ENCODE measurements at regions of chr20 and their contacts with region 1.

Region 1: GRCh38 chr20:18287915-18288748 is at the start of gene ZNF133:
- DNase-seq: peak; percentile 97
- ATAC-seq: peak; percentile 98 to 99 (median 98)
- H3K4me3 ChIP-seq: peak within 1 kb of the TSS; percentile 75
- H3K27ac ChIP-seq: peak within 1 kb of the TSS; percentile 95
- H3K4me1 ChIP-seq: no peaks in the 10 kb centered on the region
- H3K27me3 ChIP-seq: peaks cover 0 to 5% (median 1%) of the 10 kb centered on the region in 3 donors
- CTCF ChIP-seq: no peak
- total RNA-seq, gene ZNF133: 5.2 to 9.7 (median 7.3) TPM

Region 2: GRCh38 chr20:17968366-17969279 is 319.5 kb before region 1 on chr20 and contains the starts of genes MGME1 and SNX5:
- intact Hi-C with region 1: loop called in 1 of 2 experiments (anchors 5 kb)
- DNase-seq: peak; percentile 99 to 100
- ATAC-seq: peak; percentile 92 to 96 (median 92)
- H3K4me3 ChIP-seq: peak within 1 kb of the TSS; percentile 97
- H3K27ac ChIP-seq: peak within 1 kb of the TSS; percentile 98
- H3K4me1 ChIP-seq: peaks cover 54% of the 10 kb centered on the region
- H3K27me3 ChIP-seq: no peaks in the 10 kb centered on the region
- CTCF ChIP-seq: no peak
- total RNA-seq, gene MGME1: 8.6 to 21.8 (median 12.2) TPM
- total RNA-seq, gene SNX5: 59.8 to 81.3 (median 69.7) TPM

Region 3: GRCh38 chr20:18252597-18253451 is 35.3 kb before region 1 on chr20:
- intact Hi-C with region 1: no loop called
- DNase-seq: no peak
- ATAC-seq: no peak
- H3K4me3 ChIP-seq: no peak overlapping the region
- H3K27ac ChIP-seq: no peak overlapping the region
- H3K4me1 ChIP-seq: no peaks in the 10 kb centered on the region
- H3K27me3 ChIP-seq: no peaks in the 10 kb centered on the region
- CTCF ChIP-seq: no peak

Region 4: GRCh38 chr20:18466894-18467730 is 179.0 kb after region 1 on chr20 and contains the starts of genes DZANK1 and POLR3F:
- intact Hi-C with region 1: loop called in 1 of 2 experiments (anchors 5 kb)
- DNase-seq: peak; percentile 97
- ATAC-seq: peak; percentile 100
- H3K4me3 ChIP-seq: peak within 1 kb of the TSS; percentile 98
- H3K27ac ChIP-seq: peak within 1 kb of the TSS; percentile 92
- H3K4me1 ChIP-seq: peaks cover 13% of the 10 kb centered on the region
- H3K27me3 ChIP-seq: no peaks in the 10 kb centered on the region
- CTCF ChIP-seq: no peak
- total RNA-seq, gene DZANK1: 0.25 to 0.71 (median 0.43) TPM
- total RNA-seq, gene POLR3F: 3.2 to 8.4 (median 6.6) TPM